Brain microvascular endothelial cell (primary cell): ENCODE measurements at regions of chr13 and their contacts with region 1.

Region 1: DNA sequence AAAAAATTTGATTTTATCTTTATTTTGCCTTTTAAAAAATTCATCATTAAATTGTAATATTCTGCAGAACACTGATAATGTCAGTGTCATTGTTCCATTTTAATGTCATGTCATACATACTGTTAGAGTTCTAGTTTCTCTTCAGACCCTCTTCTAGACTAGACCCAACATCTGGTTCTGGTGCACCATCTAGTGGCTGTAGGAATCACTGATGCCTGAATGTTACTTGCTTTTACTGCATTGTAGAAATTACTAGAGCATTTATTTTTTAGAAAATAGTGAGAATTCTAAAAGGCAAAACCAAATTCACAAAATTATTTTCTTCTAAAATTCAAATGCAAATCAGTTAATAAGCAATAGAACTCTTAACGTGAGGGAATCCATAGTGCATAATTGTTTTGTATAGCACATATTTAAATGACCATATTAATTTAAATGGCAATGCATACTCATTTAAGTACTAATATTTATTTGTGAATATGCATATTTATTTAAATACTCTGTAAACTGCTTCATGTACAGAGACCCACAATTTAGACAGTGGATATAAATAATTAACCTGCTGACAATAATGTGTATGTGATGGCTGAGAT is 425.7 kb downstream of the KLF12 start:
- DNase-seq: peak; percentile 65
- H3K4me3 ChIP-seq: no peak overlapping the region
- H3K27ac ChIP-seq: no peak overlapping the region
- H3K27me3 ChIP-seq: no peaks in the 10 kb centered on the region
- CTCF ChIP-seq: peak; percentile 80

Region 2: DNA sequence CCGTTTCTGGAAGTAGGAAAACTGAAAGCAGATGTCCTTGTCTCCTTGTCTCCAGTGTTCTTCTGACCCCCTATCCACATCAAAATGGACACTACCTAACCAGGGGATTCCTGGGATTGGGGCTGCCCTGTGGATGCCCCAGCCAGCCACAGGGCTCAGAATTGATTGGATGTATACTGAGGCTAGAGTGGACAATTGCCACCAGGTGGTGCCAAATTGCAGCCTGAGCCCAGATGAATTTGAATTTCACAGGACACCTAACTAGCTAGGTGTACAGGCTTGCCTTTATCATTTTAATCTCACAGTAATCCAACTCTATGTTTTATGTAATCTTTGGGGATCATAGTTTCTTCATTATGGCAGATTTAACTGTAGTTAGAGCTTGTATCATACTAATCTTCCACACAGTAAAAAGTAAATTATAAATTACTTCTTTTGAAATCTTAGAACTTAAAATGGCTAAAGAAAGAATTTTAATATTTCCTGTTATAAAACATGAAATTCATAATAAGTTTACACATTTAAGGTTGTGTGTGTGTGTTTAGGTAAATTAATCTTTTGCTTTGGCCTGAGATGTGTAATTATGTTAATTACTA is 868.6 kb before region 1 on chr13:
- in situ Hi-C with region 1: loop called (anchors 25 kb)
- DNase-seq: peak; percentile 44
- H3K4me3 ChIP-seq: no peak overlapping the region
- H3K27ac ChIP-seq: no peak overlapping the region
- H3K27me3 ChIP-seq: no peaks in the 10 kb centered on the region
- CTCF ChIP-seq: peak; percentile 84